ENCODE measurements at regions of chr11 and their contacts with region 1.

Region 1: GRCh38 chr11:34640050-34640923 is 19.4 kb downstream of the EHF start:
- DNase-seq: peak; percentile 85 to 92 (median 90)
- ATAC-seq: peak; percentile 91
- H3K4me3 ChIP-seq: no peak overlapping the region
- H3K27ac ChIP-seq: peak overlapping the region; percentile 89 to 94 (median 90)
- H3K4me1 ChIP-seq: peaks cover 97% of the 10 kb centered on the region
- H3K27me3 ChIP-seq: no peaks in the 10 kb centered on the region
- CTCF ChIP-seq: peak in 1 of 7 experiments; percentile 4
- POLR2A ChIP-seq: peak in 2 of 3 donors; percentile 38 to 41

Region 2: GRCh38 chr11:34585735-34586487 is 54.4 kb before region 1 on chr11:
- intact Hi-C with region 1: loop called (anchors 10 kb)
- DNase-seq: no peak
- ATAC-seq: peak; percentile 58
- H3K4me3 ChIP-seq: no peak overlapping the region
- H3K27ac ChIP-seq: peak overlapping the region; percentile 21 to 59 (median 47)
- H3K4me1 ChIP-seq: peaks cover 39% of the 10 kb centered on the region
- H3K27me3 ChIP-seq: no peaks in the 10 kb centered on the region
- CTCF ChIP-seq: peak; percentile 39 to 89 (median 82)
- POLR2A ChIP-seq: no peak